A673 (cell line): ENCODE measurements at regions of chr19 and their contacts with region 1.

Region 1: GRCh38 chr19:41335467-41335866 is 18.3 kb downstream of the TGFB1 start:
- DNase-seq: no peak
- H3K4me3 ChIP-seq: no peak overlapping the region
- H3K27ac ChIP-seq: no peak overlapping the region
- H3K4me1 ChIP-seq: no peaks in the 10 kb centered on the region
- H3K27me3 ChIP-seq: no peaks in the 10 kb centered on the region
- CTCF ChIP-seq: no peak

Region 2: DNA sequence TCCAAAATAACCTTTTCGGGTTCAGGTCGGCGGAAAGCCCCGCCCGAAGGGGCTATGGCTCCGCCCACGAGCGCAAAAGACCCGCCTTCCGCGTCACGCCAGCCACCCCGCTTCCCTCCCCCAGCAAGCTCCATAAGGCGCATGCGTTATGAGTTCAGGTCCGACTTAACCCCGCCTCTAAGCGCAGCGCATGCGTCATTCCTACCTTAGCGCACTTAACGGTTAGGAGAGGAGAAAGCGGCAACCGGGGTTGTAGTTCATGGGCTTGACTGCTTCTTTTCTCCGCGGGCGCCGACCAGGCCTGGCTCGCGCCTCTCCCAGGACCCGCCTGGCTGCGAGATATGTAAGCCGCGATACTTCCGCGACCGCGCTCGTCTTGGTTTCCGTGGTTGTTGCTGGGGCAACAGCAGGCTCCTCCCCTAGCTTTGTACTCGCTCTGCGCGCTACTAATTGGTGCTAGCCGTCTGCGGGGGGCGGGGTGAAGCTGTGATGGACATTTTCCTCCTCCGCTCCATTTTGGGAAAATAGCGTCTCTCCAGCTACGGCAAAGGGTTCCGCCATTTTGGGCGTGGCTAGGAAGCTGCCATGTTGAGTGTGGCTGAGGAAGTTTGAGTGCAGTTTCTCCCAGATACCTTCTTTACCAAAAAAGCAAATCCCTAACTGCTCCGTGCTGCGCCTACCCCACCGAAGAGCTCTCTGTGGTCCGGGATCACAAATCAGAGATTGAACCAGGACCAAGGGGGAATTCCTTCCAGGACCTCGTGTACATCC is 28.5 kb after region 1 on chr19 and contains the start of gene B9D2:
- CTCF ChIA-PET with region 1: no interaction called
- POLR2A ChIA-PET with region 1: interaction called, 10 read pairs
- intact Hi-C with region 1: no loop called
- DNase-seq: peak; percentile 99
- H3K4me3 ChIP-seq: peak within 1 kb of the TSS; percentile 79
- H3K27ac ChIP-seq: peak within 1 kb of the TSS; percentile 100
- H3K4me1 ChIP-seq: peaks cover 6% of the 10 kb centered on the region
- H3K27me3 ChIP-seq: no peaks in the 10 kb centered on the region
- CTCF ChIP-seq: no peak
- total RNA-seq, gene B9D2: 9.9 and 10.7 TPM in 2 replicates

Region 3: GRCh38 chr19:41397086-41398049 is 61.9 kb after region 1 on chr19 and contains the starts of genes BCKDHA and EXOSC5:
- CTCF ChIA-PET with region 1: no interaction called
- POLR2A ChIA-PET with region 1: no interaction called
- intact Hi-C with region 1: no loop called
- DNase-seq: peak; percentile 100
- H3K4me3 ChIP-seq: peak within 1 kb of the TSS; percentile 86
- H3K27ac ChIP-seq: peak within 1 kb of the TSS; percentile 97
- H3K4me1 ChIP-seq: peaks cover 10% of the 10 kb centered on the region
- H3K27me3 ChIP-seq: no peaks in the 10 kb centered on the region
- CTCF ChIP-seq: no peak
- total RNA-seq, gene BCKDHA: 14.7 and 15.9 TPM in 2 replicates
- total RNA-seq, gene EXOSC5: 35.0 and 43.1 TPM in 2 replicates